HEK293 (cell line): ENCODE measurements at regions of chr6 and their contacts with region 1.

Region 1: GRCh38 chr6:89122625-89123024 is 4.8 kb upstream of the SRSF12 start:
- H3K4me3 ChIP-seq: no peak overlapping the region
- H3K27ac ChIP-seq: no peak overlapping the region
- H3K4me1 ChIP-seq: no peaks in the 10 kb centered on the region
- CTCF ChIP-seq: peak; percentile 45; the same call in 1 of the 2 replicates

Region 2: DNA sequence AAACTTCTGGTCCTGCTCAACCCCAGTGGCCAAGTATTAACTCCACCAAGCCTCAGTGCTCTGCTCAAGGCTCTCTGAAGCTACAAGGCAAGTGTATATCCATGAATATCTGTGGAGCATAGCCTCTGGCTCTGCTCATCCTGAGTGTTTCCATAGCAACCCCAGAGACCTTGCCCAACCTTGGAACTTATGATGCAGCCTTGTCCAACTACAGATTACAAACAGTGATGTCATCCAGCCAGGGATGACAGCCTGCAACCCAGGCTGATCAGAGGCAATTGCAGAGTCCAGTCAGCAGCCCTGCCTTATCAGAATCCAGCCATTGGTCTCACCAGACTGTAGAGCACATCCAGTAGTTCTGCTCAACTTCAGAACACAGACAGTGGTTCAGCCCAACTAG is 1140.5 kb before region 1 on chr6:
- CTCF ChIA-PET with region 1: no interaction called
- POLR2A ChIA-PET with region 1: no interaction called
- H3K4me3 ChIP-seq: no peak overlapping the region
- H3K27ac ChIP-seq: no peak overlapping the region
- H3K4me1 ChIP-seq: no peaks in the 10 kb centered on the region
- CTCF ChIP-seq: no peak

Region 3: GRCh38 chr6:89140347-89141156 is 17.9 kb after region 1 on chr6:
- CTCF ChIA-PET with region 1: interaction called, 24 read pairs
- POLR2A ChIA-PET with region 1: interaction called, 11 read pairs
- H3K4me3 ChIP-seq: no peak overlapping the region
- H3K27ac ChIP-seq: peak overlapping the region; percentile 7; the same call in 1 of the 2 replicates
- H3K4me1 ChIP-seq: peaks cover 44% of the 10 kb centered on the region
- CTCF ChIP-seq: no peak

Region 4: GRCh38 chr6:89145787-89146646 is 23.4 kb after region 1 on chr6 and contains the start of gene PM20D2:
- CTCF ChIA-PET with region 1: interaction called, 24 read pairs
- POLR2A ChIA-PET with region 1: interaction called, 11 read pairs
- H3K4me3 ChIP-seq: peak within 1 kb of the TSS; percentile 83
- H3K27ac ChIP-seq: peak within 1 kb of the TSS; percentile 93
- H3K4me1 ChIP-seq: peaks cover 20% of the 10 kb centered on the region
- CTCF ChIP-seq: no peak; the same call in 1 of the 2 replicates

Region 5: DNA sequence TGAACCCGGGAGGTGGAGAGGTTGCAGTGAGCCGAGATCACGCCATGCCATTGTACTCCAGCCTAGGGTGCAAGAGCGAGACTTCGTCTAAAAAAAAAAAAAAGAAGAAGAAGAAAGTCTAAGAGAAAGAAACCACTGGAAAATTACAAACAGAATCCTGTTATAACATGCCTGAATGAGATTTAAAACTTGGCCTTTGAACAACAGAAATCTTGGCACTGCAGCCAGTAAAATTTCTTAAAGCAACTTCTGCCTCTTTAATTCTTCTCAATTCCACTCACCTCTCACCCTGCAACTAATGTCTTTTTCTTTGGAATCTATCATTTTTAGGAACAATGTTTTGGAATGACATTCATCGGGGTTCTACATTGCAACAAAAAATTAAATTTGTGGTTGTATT is 49.5 kb after region 1 on chr6:
- CTCF ChIA-PET with region 1: interaction called, 11 read pairs
- POLR2A ChIA-PET with region 1: no interaction called
- H3K4me3 ChIP-seq: no peak overlapping the region
- H3K27ac ChIP-seq: no peak overlapping the region
- H3K4me1 ChIP-seq: no peaks in the 10 kb centered on the region
- CTCF ChIP-seq: no peak

Region 6: DNA sequence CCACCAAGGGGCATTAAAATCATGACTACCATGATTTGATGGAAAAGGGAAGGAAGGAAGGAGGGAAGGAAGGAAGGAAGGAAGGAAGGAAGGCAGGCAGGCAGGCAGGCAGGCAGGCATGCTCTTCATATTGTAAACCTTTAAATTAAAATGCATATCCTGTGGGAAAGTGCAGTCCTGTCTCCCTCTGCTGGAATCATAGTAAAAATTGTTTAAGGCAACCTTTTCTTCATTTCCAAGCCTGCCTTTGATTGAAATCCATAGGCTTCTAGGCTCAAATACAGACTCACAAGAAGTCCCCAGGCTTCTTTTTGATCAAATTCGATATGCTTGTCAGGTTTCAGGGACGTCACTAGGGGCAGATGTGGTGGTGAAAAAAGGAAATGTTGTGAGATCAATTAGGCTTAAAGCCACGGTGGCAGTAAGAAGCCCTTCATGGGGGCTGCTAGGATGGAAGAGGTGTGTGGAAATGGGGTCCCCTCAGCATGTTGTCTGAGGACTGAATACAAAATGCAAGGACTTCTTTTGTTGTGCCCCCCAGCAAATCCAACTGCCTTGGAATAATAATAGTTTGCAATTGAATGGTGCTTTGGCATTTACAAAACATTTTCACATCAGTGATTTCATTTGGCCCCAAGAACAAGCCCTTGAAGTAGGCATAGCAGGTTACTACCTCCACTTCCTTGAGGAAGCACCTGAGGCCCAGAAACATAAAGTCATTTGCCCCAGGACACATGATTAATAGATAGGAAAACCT is 120.1 kb after region 1 on chr6:
- CTCF ChIA-PET with region 1: interaction called, 51 read pairs
- POLR2A ChIA-PET with region 1: interaction called, 7 read pairs
- H3K4me3 ChIP-seq: no peak overlapping the region
- H3K27ac ChIP-seq: no peak overlapping the region
- H3K4me1 ChIP-seq: no peaks in the 10 kb centered on the region
- CTCF ChIP-seq: peak; percentile 68; the same call in 1 of the 2 replicates